ENCODE measurements at regions of chr12 and their contacts with region 1.

Region 1: GRCh38 chr12:109377139-109377685 is 29.5 kb downstream of the MYO1H start:
- DNase-seq: no peak
- H3K4me3 ChIP-seq: no peak overlapping the region
- H3K27ac ChIP-seq: no peak overlapping the region
- H3K4me1 ChIP-seq: no peaks in the 10 kb centered on the region; a peak in 1 of 7 replicates
- H3K27me3 ChIP-seq: no peaks in the 10 kb centered on the region
- CTCF ChIP-seq: no peak
- EP300 ChIP-seq: no peak
- POLR2A ChIP-seq: no peak
- RAD21 ChIP-seq: no peak

Region 2: DNA sequence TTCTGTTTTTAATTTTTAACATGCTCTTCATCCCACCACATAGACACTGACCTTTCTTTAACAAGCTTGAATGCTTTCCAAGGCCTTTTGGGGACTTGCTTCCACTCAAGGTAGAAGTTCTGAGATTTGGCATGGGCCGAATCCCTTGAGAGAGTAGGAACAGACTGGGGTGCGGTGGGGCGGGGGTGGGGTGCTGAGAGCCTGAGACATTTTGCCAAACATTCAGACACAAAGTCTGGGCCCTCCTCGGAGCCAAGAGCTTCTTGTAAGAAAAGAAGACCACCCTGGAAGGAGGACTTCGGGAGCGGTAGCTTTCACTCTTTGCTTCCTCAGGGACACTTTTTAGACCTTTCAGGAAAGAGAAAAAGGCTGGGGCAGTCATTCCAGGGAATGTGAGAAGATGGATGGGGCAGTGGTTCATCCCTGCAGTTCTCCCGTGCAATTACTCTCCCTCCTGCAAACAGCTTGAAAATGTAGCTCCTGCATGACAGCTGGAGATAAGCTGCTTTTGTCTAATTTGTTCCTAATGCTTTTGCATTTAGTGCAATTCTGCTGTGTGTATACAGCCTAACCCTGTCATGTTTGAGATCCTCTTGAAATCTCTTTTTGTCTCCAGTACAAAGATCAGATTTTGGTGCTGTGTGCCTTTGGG is 45.8 kb before region 1 on chr12:
- CTCF ChIA-PET with region 1: no interaction called
- POLR2A ChIA-PET with region 1: no interaction called
- DNase-seq: no peak
- H3K4me3 ChIP-seq: no peak overlapping the region
- H3K27ac ChIP-seq: no peak overlapping the region
- H3K4me1 ChIP-seq: no peaks in the 10 kb centered on the region
- H3K27me3 ChIP-seq: no peaks in the 10 kb centered on the region; a peak in 1 of 7 replicates
- CTCF ChIP-seq: no peak
- EP300 ChIP-seq: no peak
- POLR2A ChIP-seq: no peak
- RAD21 ChIP-seq: no peak

Region 3: DNA sequence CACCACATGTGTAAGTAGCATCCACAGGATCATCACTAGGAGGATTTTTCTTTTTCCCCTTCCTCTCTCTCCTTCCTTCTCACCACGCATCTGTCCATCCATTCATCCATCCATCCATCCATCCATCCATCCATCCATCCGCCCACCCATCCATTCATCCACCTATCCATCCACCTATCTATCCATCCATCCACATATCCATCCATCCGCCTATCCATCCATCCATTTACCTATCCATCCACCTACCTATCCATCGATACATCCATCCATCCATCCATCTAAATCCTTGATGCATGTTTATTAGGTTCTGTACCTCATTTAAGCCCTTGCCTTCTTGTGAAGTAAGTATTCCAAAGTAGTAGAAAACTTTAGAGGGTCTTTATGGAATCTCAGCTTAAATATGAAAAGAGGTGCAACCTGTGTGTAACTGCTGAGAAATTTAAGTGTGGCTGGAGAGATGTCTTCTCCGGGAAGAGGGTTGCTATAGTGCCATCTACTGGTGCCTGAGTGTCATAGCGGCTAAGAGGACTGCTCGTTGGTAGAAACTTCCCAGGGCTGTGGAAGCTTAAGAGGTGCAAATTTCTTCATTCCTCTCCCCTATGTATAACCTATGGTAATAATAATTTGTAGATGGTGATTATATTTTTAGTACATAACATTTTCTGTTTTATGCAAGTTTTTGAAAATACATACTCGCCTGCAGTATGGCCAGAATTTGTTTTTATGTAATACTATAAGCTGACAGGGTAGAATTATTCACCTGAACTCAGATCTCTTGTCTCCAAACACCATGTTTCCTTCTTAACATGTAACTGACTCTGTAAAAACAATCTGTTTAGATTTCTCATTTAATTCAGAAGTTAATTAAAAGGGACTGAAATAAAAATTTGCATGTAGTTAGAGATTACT is 16.5 kb after region 1 on chr12:
- CTCF ChIA-PET with region 1: interaction called, 28 read pairs
- POLR2A ChIA-PET with region 1: no interaction called
- DNase-seq: no peak
- H3K4me3 ChIP-seq: no peak overlapping the region
- H3K27ac ChIP-seq: no peak overlapping the region
- H3K4me1 ChIP-seq: no peaks in the 10 kb centered on the region
- H3K27me3 ChIP-seq: no peaks in the 10 kb centered on the region
- CTCF ChIP-seq: peak; percentile 64 to 90 (median 73)
- EP300 ChIP-seq: no peak
- POLR2A ChIP-seq: no peak
- RAD21 ChIP-seq: peak; percentile 64 to 76